ENCODE measurements at regions of chr1 and their contacts with region 1.

Region 1: GRCh38 chr1:201023517-201023902 is at the start of gene KIF21B:
- DNase-seq: peak in 1 of 2 experiments; percentile 92
- H3K4me3 ChIP-seq: peak within 1 kb of the TSS; percentile 64 to 84 (median 67)
- H3K27ac ChIP-seq: no peak within 1 kb of the TSS
- H3K4me1 ChIP-seq: peaks cover 22 to 49% (median 37%) of the 10 kb centered on the region in 4 experiments
- H3K27me3 ChIP-seq: peaks cover 0 to 5% (median under 1%) of the 10 kb centered on the region in 4 experiments; a peak in 2 of 7 replicates
- CTCF ChIP-seq: no peak
- EP300 ChIP-seq: no peak
- POLR2A ChIP-seq: no peak
- RAD21 ChIP-seq: no peak
- total RNA-seq, gene KIF21B: 26.5 and 27.2 TPM in 2 replicates

Region 2: GRCh38 chr1:200802865-200803512 is 220.5 kb before region 1 on chr1:
- CTCF ChIA-PET with region 1: no interaction called
- POLR2A ChIA-PET with region 1: no interaction called
- DNase-seq: peak; percentile 84 to 87
- H3K4me3 ChIP-seq: peak overlapping the region in 1 of 4 experiments; percentile 21; a peak in 1 of 8 replicates
- H3K27ac ChIP-seq: no peak overlapping the region
- H3K4me1 ChIP-seq: 0 out of 7 replicates have a peak, but pooled peaks cover 0 to 2% (median 0%) of the 10 kb centered on the region in 4 experiments
- H3K27me3 ChIP-seq: no peaks in the 10 kb centered on the region
- CTCF ChIP-seq: peak; percentile 87 to 99 (median 90)
- EP300 ChIP-seq: no peak
- POLR2A ChIP-seq: no peak
- RAD21 ChIP-seq: peak; percentile 90 to 92

Region 3: DNA sequence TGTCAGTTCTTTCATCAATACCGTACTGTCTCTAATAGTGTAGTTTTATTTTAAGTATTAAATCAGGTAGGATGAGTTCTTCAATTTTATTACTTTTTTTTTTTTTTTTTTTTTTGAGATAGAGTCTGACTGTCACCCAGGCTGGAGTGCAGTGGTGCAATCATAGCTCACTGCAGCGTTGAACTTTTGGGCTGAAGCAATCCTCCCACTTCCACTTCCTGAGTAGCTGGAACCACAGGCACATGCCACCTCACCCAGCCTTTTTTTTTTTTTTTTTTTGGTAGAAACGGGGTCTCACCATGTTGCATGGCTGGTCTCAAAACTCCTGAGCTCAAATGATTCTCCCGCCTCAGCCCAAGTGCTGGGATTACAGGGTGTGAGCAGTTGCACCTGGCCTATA is 84.6 kb before region 1 on chr1:
- CTCF ChIA-PET with region 1: no interaction called
- POLR2A ChIA-PET with region 1: no interaction called
- DNase-seq: no peak
- H3K4me3 ChIP-seq: no peak overlapping the region
- H3K27ac ChIP-seq: no peak overlapping the region
- H3K4me1 ChIP-seq: no peaks in the 10 kb centered on the region
- H3K27me3 ChIP-seq: no peaks in the 10 kb centered on the region
- CTCF ChIP-seq: no peak
- EP300 ChIP-seq: no peak
- POLR2A ChIP-seq: no peak
- RAD21 ChIP-seq: no peak

Region 4: DNA sequence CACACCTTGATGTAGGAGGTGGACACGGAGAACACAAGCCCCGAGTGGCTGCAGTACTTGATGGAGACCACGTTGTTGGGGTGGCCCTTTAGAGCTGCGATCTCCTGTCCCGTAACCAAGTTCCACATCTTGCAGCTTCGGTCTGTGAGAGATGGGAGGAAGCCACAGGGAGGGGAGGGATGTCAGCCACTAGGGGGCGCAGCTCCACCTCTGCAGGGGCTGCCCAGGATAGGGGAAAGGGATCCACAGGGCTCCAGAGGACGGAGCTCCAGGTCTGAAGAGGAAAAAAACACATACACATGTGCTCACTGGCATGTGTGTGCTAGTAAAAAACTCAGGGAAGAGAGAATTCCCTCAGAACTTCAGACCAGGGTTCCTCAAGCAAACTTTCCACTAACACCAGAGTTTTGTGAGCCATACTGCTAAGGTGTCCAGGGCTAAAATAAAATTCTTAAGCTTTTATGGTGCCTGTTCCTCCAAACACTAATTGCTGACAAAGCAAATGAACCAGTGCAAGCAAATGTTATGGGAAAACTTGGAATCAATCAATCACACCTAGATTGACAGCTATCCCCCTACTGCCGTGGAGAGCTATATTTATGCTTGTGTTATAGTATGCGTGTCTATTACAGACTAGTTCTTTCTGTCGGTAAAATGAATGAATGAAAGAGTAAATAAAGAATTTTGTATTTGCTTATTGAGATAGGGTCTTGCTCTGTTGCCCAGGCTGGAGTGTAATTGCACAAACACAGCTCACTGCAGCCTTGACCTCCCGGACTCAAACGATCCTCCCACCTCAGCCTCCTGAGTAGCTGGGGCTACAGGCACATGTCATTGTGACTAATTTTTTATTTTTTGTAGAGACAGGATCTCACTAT is 43.7 kb before region 1 on chr1:
- CTCF ChIA-PET with region 1: interaction called, 532 read pairs
- POLR2A ChIA-PET with region 1: interaction called, 5 read pairs
- DNase-seq: peak; percentile 47 to 95
- H3K4me3 ChIP-seq: no peak overlapping the region
- H3K27ac ChIP-seq: no peak overlapping the region
- H3K4me1 ChIP-seq: no peaks in the 10 kb centered on the region
- H3K27me3 ChIP-seq: no peaks in the 10 kb centered on the region
- CTCF ChIP-seq: peak; percentile 90 to 98 (median 97)
- EP300 ChIP-seq: peak in 1 of 2 experiments; percentile 10; a peak in 1 of 3 replicates
- POLR2A ChIP-seq: no peak
- RAD21 ChIP-seq: peak; percentile 87 to 89

Region 5: DNA sequence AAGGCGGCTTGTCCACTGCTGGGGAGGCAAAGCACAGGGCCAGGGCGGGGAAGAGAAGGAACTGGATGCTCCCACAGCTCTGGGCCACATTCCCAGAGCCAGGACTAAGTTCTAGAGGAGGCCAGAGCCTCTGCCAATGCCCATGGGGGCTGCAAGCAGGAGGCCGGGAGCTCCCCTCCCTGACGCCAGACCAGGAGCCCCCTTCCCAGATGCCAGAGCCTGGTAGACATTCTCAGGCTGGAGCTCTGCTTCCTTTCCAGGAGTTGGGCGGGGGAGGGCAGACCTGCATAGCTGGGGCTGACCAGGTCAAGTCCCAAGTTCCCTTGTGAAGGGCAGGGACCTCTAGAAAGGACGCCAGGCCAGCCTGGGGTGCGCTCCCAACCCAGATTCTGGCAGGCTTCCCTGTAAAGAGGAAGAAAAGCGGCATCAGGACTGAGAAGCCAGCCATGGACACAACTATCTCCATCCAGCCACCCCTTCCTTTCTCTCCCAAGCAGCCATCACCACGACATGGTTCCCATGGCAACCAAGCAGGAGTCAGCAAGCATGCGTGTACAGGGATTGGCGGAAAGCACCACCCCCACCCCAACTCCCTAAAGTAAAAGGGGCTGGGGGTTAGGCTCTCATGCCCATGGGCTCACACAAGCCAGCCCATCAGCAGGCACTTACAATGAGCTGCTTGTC is 13.4 kb before region 1 on chr1:
- CTCF ChIA-PET with region 1: interaction called, 56 read pairs
- POLR2A ChIA-PET with region 1: interaction called, 33 read pairs
- DNase-seq: no peak
- H3K4me3 ChIP-seq: no peak overlapping the region
- H3K27ac ChIP-seq: 0 out of 2 replicates have a peak overlapping the region, but pooled peaks have one; percentile 26
- H3K4me1 ChIP-seq: peaks cover 0 to 17% (median 11%) of the 10 kb centered on the region in 4 experiments; a peak in 6 of 7 replicates
- H3K27me3 ChIP-seq: no peaks in the 10 kb centered on the region
- CTCF ChIP-seq: no peak
- EP300 ChIP-seq: no peak
- POLR2A ChIP-seq: no peak
- RAD21 ChIP-seq: no peak

Region 6: GRCh38 chr1:201053158-201053860 is 29.8 kb after region 1 on chr1:
- CTCF ChIA-PET with region 1: interaction called, 23 read pairs
- POLR2A ChIA-PET with region 1: interaction called, 3 read pairs
- DNase-seq: no peak
- H3K4me3 ChIP-seq: no peak overlapping the region
- H3K27ac ChIP-seq: no peak overlapping the region
- H3K4me1 ChIP-seq: no peaks in the 10 kb centered on the region; a peak in 1 of 7 replicates
- H3K27me3 ChIP-seq: no peaks in the 10 kb centered on the region
- CTCF ChIP-seq: peak; percentile 22 to 53 (median 42); a peak in 3 of 4 replicates
- EP300 ChIP-seq: no peak
- POLR2A ChIP-seq: no peak
- RAD21 ChIP-seq: peak in 1 of 2 experiments; percentile 17; a peak in 1 of 4 replicates

Region 7: GRCh38 chr1:201114236-201115131 is 91.0 kb after region 1 on chr1:
- CTCF ChIA-PET with region 1: interaction called, 18 read pairs
- POLR2A ChIA-PET with region 1: interaction called, 4 read pairs
- DNase-seq: peak; percentile 90 to 91
- H3K4me3 ChIP-seq: peak overlapping the region; percentile 30 to 72 (median 50)
- H3K27ac ChIP-seq: no peak overlapping the region
- H3K4me1 ChIP-seq: peaks cover 0 to 5% (median under 1%) of the 10 kb centered on the region in 4 experiments; a peak in 1 of 7 replicates
- H3K27me3 ChIP-seq: peaks cover 9 to 27% (median 21%) of the 10 kb centered on the region in 4 experiments
- CTCF ChIP-seq: peak; percentile 86 to 96 (median 95)
- EP300 ChIP-seq: no peak
- POLR2A ChIP-seq: peak in 1 of 2 experiments; percentile 77; a peak in 2 of 3 replicates
- RAD21 ChIP-seq: peak; percentile 95 to 99

Measured in H1 (cell line).